ENCODE measurements at regions of chr15 and their contacts with region 1.

Region 1: GRCh38 chr15:34367101-34368081 is at the start of gene LPCAT4:
- DNase-seq: peak; percentile 34
- H3K4me3 ChIP-seq: peak within 1 kb of the TSS; percentile 89
- CTCF ChIP-seq: peak; percentile 99

Region 2: DNA sequence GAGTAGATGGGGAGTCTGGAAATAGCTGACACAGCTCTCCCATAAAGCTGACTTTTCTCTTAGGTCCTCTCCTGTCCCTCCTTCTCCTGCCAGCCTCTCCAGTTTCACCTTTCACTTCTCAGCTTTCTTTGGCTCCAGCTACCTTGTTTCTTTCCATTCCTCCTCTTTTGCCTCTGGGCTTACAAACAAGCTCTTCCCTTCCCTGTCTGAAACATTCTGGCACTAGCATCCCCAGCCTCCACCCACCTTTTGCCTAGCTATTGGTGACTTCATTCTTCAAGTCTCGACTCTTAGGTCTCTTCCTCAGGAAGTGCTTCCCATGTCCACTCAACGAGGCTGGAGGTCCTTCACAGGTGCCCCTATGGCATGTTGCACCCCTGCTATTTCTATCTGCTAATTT is 307.9 kb before region 1 on chr15:
- CTCF ChIA-PET with region 1: interaction called, 28 read pairs
- POLR2A ChIA-PET with region 1: no interaction called
- DNase-seq: no peak
- H3K4me3 ChIP-seq: no peak overlapping the region
- CTCF ChIP-seq: no peak

Region 3: DNA sequence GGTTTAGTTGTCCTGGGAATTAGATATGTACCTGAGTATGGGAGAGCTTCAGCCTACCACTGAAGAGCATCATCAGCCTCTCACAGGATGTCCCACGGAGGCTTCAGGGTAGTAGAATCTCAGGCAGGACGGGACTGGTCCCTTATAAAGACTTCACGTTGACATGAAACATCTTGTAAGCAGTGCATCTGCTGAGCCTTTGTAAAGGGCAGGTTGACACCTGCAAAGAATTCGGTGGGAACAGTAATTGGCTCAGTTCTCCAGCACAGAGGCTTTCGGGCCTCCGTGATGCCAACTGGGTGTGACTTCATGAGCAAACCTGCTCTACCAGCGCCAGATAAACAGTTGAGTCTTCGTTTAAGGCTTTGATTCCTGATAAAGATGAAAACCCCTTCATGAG is 301.4 kb before region 1 on chr15:
- CTCF ChIA-PET with region 1: interaction called, 28 read pairs
- POLR2A ChIA-PET with region 1: no interaction called
- DNase-seq: no peak
- H3K4me3 ChIP-seq: no peak overlapping the region
- CTCF ChIP-seq: no peak

Region 4: DNA sequence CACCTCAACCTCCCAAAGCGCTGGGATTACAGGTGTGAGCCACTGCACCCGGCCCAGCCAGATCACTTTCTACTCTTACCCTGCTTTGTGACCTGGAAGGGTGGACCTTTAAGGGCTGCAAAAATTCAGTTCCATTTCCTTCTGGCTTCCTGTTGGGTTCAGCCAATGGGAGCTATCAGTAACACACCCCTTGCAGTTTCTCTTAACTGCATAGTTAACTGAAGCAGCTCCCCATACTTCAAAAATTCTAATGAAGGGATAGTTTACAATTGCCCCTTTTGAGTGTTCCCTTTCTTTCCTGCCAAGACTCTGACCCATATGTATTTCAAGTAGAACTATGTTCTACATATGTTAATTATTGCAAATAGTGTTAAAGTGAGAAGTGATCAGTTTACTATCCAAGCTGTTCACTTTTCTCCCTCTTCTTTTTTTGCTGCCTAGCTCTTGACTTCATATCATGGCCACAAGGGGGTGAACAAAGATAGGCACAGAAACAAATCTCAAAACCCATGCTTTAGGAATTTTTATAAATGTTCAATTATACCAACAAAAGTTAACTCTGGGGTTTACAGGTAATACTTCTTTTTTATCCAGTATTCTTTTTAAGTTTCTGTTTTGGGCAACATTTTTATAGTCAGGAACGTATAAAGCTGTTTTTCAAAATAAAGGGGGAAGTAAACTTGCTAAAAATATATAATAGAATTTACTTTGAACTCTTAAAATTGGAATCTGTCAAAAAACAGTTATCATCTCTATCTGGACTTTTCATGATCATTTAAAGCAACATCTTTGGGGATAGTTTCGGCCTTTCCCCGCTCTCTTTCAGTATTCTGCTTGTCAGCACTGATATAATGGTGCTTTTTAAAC is 257.4 kb before region 1 on chr15:
- CTCF ChIA-PET with region 1: interaction called, 48 read pairs
- POLR2A ChIA-PET with region 1: no interaction called
- DNase-seq: no peak
- H3K4me3 ChIP-seq: no peak overlapping the region
- CTCF ChIP-seq: peak; percentile 59

Region 5: GRCh38 chr15:34223904-34224596 is 143.3 kb before region 1 on chr15:
- CTCF ChIA-PET with region 1: interaction called, 10 read pairs
- POLR2A ChIA-PET with region 1: no interaction called
- DNase-seq: no peak
- H3K4me3 ChIP-seq: peak overlapping the region; percentile 99
- CTCF ChIP-seq: no peak

Region 6: DNA sequence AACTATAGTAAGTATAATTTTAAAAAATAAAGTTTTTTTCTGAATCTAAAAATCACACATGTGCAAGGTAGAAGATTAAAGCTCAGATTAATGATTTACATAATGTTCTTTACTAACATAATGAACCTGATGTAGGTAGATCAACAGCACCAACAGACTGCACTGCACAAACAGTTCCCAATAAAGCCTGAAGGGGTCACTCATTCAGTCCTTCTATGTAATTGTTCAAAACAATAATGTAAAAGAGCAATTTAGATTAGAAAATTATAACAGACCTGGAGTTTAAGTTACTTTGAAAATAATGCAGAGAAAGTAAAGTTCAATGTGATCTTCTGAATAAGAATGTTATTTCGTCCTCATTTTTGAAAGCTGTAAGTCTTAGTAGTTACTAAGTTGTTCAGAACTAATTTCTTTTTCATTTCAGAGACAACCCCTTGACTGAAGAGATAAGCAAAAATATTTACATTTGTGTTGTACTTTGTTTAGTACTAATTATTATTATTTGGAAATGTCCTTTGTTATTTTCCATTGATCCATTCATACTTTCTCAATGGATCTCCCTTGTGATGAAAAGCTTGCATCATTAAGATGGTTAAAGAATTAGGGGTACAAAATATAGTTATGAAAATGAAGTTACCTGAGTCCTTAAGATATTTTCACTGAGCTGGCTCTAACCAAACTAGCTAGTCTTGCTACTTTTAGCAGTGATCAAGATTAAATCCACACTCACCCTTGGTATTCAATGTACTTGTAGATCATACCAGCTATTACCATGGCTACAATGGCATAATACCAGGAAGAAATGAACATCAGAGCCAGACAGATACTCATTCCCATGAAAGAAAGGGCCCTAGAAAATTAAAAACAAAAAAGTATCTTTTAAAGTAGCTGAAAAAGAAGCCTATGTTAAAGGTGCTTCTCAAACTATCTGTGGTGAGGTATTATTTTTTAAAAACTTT is 125.7 kb before region 1 on chr15:
- CTCF ChIA-PET with region 1: interaction called, 54 read pairs
- POLR2A ChIA-PET with region 1: no interaction called
- DNase-seq: no peak
- H3K4me3 ChIP-seq: no peak overlapping the region
- CTCF ChIP-seq: peak; percentile 36

Region 7: DNA sequence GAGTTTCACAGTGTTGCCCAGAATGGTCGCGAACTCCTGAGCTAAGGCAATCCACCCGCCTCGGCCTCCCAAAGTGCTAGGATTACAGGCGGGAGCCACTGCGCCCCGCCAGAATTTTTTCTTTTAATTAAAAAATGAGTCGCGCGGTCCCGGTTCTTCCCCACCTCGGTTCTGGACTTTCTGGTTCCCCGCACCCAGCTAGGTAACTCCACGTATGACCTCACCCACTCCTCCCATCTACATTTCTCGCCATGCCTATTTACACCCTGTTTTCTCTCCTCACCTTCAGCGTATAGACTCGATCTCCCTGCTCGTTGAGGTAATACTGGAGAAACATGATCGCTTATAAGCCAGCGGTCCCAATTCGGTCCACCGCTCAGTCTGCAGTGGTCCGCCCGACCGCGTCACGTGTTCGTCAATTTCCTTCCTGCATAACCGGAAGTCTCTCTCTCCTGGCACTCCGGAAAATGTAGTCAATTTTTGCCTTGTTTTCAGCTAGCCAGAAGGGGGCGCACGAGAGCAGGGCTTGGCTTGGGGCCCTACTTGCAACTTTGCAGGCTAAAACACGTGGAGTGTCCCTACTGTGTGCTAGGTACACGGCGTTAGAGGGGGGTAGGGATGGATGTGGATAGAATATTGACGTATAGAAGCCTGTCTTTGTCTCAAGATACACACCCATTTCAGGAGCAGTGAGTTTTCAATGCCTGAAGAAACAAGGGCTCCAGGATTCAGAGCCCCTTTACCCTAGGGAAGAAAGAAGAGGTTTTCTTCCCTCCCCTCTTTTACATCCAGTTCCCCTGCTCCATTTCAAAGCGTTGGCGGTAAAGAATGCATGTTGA is 24.4 kb before region 1 on chr15 and contains the starts of genes NOP10 and NUTM1:
- CTCF ChIA-PET with region 1: interaction called, 17 read pairs
- POLR2A ChIA-PET with region 1: interaction called, 7 read pairs
- DNase-seq: no peak
- H3K4me3 ChIP-seq: peak within 1 kb of the TSS; percentile 99
- CTCF ChIP-seq: peak; percentile 95

Region 8: DNA sequence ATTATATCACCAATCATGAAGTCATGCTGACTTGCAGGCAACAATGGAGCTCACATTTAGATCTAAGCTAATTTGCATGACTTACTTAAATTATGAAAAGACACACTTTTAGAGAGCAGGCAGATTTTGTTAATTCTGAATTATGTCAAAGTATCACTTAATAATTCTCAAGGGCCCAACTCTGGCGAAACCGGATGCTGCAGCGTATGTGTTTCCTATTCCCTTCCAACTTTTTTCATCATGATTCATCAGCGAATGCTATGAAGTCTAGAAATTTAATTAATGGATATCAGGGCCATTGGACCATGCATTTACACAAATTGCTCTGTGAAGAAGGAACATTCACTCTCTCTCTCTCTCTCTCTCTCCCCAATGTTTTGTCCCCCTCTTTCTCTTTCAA is 133.7 kb after region 1 on chr15:
- CTCF ChIA-PET with region 1: no interaction called
- POLR2A ChIA-PET with region 1: no interaction called
- DNase-seq: no peak
- H3K4me3 ChIP-seq: no peak overlapping the region
- CTCF ChIP-seq: no peak